Posterior vena cava (tissue), 2 donors: ENCODE measurements at regions of chr1 and their contacts with region 1.

Region 1: GRCh38 chr1:210352575-210352974 is 23.9 kb downstream of the HHAT start:
- DNase-seq: no peak

Region 2: DNA sequence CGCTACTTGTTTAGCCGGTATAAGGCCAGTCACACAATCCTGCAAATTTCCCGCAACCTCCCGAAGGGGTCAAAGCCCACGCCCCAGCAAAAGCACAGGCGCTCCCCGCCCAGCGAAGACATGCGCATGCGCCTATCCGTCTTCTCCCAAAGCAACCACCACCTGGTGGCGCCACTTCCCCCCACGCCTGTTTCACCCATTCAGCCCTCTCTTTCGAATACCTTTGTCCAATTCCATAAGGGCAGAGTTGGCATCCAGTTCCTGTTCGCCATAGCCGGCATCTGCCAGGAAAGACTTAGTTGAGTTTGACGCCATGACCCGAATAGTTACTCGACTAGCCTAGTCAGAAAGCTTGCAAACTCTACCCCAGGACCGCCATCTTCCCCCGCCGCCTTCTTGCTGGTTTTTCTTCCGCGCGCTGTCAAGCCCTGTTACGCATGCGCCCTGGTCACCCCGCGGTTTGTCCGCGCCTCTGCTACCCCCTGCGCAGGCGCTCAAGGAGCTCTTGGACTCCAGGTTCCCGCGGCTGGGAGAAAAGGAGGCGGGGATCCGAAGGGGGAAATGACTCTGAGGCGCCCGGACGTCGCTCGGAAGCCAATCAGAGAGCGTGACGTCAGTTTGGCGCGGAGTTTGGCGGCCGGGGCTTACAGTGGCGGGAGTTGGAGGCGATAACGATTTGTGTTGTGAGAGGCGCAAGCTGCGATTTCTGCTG is 1682.7 kb after region 1 on chr1 and contains the starts of genes DTL and INTS7:
- intact Hi-C with region 1: loop called in 1 of 2 experiments (anchors 5 kb)
- DNase-seq: peak; percentile 100
- total RNA-seq, gene DTL: 0.74 to 1.2 TPM
- total RNA-seq, gene INTS7: 8.9 to 9.6 TPM